SK-N-SH (cell line): ENCODE measurements at regions of chr15 and their contacts with region 1.

Region 1: DNA sequence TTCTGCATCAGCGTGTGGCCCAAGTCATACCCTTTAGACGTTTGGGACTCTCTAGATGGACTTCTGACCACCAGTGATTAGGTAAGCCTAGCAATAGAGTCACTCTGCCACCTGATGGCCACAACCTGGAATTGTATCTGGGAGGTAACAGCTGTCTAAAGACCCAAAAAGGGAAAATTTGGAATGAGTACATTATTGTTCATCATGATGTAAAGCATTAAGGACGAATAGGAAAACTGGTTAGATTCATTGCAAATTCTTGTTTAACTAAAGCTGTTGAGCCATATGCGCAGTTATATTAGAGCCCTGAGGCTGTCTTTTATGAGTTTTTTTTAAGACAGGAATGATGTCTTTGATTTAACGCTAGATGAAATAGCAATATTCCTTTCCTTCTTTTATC is 63.6 kb downstream of the FAM81A start:
- DNase-seq: peak; percentile 60
- H3K4me3 ChIP-seq: peak overlapping the region in 1 of 2 experiments; percentile 34; a peak in 1 of 4 replicates
- H3K27ac ChIP-seq: no peak overlapping the region
- H3K4me1 ChIP-seq: no peaks in the 10 kb centered on the region
- H3K27me3 ChIP-seq: no peaks in the 10 kb centered on the region
- CTCF ChIP-seq: peak; percentile 63
- EP300 ChIP-seq: no peak
- RAD21 ChIP-seq: peak; percentile 82

Region 2: DNA sequence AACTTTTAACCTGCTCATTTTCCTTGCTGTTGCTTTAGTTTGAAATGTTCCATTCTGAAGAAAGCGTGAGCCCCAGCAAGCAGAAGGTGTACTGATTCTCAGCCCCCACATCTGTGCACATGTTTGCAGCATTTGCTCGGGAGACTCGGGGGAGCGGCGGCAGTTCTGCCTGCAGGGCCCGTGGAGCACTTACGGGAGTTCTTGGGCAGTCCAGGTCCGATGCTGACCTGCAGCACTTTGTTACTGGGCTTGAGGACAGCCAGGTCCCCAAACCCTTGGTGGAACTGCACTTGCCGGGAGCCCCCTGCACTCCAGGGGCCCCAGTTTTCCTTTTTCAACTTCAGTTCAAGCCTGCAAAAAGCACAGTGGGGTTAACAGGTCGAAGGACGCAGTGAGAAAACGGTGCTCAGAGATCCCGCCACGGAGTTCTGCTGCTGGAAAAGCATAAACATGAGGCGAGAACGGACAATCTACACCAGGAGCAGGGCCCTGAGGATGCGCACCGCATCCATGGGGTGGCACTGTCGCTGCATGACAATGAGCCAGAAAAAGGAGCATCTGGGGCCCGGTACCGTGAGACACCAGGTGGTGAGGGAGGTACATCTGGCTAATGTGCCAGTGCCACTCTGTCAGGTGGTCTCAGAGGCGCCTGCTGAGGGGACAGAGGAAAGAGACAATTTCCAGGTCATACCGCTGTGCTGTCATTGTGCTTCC is 340.6 kb before region 1 on chr15:
- CTCF ChIA-PET with region 1: interaction called, 13 read pairs
- POLR2A ChIA-PET with region 1: no interaction called
- DNase-seq: peak; percentile 72
- H3K4me3 ChIP-seq: no peak overlapping the region
- H3K27ac ChIP-seq: no peak overlapping the region
- H3K4me1 ChIP-seq: no peaks in the 10 kb centered on the region; a peak in 1 of 4 replicates
- H3K27me3 ChIP-seq: no peaks in the 10 kb centered on the region
- CTCF ChIP-seq: peak; percentile 65
- EP300 ChIP-seq: no peak
- RAD21 ChIP-seq: peak; percentile 82

Region 3: DNA sequence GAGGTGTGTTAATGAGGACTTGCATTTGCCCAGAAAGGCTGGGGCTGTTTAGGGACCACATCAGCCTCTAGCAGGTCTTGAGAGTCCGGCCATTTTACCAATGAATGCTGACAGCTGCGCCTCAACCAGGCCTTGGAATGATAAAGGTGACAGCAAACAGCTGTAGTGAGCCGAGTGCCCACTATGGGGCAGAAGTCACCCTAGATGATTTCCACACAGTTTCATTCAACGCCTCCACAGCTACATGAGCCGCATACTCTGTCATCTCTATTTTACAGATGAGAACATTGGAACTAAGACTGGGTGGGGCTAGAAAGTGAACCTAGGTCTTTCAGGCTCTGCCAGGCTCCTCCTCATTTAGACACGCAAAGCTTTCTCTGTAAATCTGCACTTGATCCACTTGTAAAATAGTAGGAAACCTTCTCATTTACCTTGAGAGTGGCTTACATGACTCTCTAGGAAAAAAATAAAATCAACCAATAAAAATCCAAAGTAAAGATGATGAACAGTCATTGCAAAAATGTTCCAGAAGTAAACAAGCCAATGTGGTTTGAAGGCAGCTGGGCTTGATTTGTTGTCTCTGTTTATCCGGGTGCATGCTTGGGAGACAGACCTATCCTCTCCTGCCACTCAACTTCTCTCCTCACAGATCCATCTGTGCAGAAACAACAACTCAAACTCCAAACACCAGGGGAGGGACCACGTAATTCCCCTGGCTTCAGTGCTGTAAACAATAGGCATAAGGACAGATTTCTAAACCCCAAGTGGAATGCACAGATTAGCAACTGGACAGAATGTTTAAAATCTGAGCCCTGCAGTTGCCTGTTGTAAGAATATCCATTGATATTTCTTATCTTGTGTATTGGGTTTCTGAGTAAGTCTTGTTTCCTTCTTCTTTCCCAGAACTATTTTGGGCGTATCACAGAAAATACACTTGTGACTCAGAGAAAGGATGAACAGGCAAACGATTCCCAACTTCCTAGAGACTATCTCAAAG is 326.5 kb before region 1 on chr15:
- CTCF ChIA-PET with region 1: interaction called, 10 read pairs
- POLR2A ChIA-PET with region 1: no interaction called
- DNase-seq: peak; percentile 64
- H3K4me3 ChIP-seq: no peak overlapping the region
- H3K27ac ChIP-seq: peak overlapping the region in 1 of 2 experiments; percentile 57; a peak in 3 of 4 replicates
- H3K4me1 ChIP-seq: peaks cover 12 to 25% of the 10 kb centered on the region in 2 experiments; a peak in 3 of 4 replicates
- H3K27me3 ChIP-seq: no peaks in the 10 kb centered on the region
- CTCF ChIP-seq: peak; percentile 63
- EP300 ChIP-seq: no peak
- RAD21 ChIP-seq: peak; percentile 75

Region 4: GRCh38 chr15:59237119-59237855 is 264.3 kb before region 1 on chr15:
- CTCF ChIA-PET with region 1: no interaction called
- POLR2A ChIA-PET with region 1: no interaction called
- DNase-seq: no peak
- H3K4me3 ChIP-seq: no peak overlapping the region
- H3K27ac ChIP-seq: no peak overlapping the region
- H3K4me1 ChIP-seq: peaks cover 0 to 6% of the 10 kb centered on the region in 2 experiments; a peak in 2 of 4 replicates
- H3K27me3 ChIP-seq: no peaks in the 10 kb centered on the region
- CTCF ChIP-seq: no peak
- EP300 ChIP-seq: no peak
- RAD21 ChIP-seq: no peak

Region 5: GRCh38 chr15:59516655-59517461 is 15.3 kb after region 1 on chr15:
- CTCF ChIA-PET with region 1: interaction called, 19 read pairs
- POLR2A ChIA-PET with region 1: no interaction called
- DNase-seq: no peak
- H3K4me3 ChIP-seq: no peak overlapping the region
- H3K27ac ChIP-seq: no peak overlapping the region
- H3K4me1 ChIP-seq: peaks cover 0 to 2% of the 10 kb centered on the region in 2 experiments; a peak in 1 of 4 replicates
- H3K27me3 ChIP-seq: no peaks in the 10 kb centered on the region
- CTCF ChIP-seq: no peak
- EP300 ChIP-seq: no peak
- RAD21 ChIP-seq: no peak